ENCODE measurements at regions of chr1 and their contacts with region 1.

Region 1: DNA sequence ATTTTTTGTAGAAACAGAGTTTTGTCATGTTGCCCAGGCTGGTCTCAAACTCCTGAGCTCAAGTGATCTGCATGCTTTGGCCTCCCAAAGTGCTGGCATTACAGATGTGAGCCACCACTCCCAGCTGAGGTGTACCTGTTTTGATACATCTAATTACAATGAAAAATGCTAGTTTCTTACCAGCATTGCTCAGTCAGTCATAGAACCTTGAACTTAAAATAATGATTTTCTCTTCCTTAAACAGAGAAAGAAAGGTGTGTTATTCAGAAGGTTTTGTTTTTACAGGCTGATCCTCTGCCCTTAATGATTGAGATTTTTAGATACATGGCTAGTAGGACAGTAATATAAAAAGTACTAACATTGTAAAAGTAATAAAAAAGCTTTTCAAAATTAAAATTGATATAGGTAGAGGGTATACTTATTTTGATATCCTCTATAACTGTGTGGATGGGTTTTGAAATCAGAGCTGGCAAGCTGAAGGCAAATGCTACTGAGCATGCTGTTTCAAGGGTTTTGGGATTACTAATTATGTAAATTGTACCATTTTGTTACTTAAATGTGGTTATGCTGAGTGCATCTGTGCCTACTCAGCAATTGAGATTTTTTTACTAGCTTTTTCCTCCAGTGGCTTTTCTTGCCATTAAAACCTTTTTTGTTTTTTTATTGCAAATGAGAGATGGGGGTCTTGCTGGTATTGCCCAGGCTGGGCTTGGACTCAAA is 16.1 kb downstream of the PRRC2C start:
- DNase-seq: no peak
- ATAC-seq: no peak
- H3K4me3 ChIP-seq: no peak overlapping the region
- H3K27ac ChIP-seq: no peak overlapping the region
- H3K4me1 ChIP-seq: no peaks in the 10 kb centered on the region; a peak in 1 of 5 replicates
- H3K27me3 ChIP-seq: no peaks in the 10 kb centered on the region
- CTCF ChIP-seq: no peak
- EP300 ChIP-seq: no peak
- POLR2A ChIP-seq: no peak
- RAD21 ChIP-seq: no peak

Region 2: GRCh38 chr1:171515299-171515698 is 13.8 kb after region 1 on chr1:
- CTCF ChIA-PET with region 1: no interaction called
- POLR2A ChIA-PET with region 1: interaction called, 12 read pairs
- in situ Hi-C with region 1: no loop called
- intact Hi-C with region 1: no loop called
- DNase-seq: no peak
- ATAC-seq: no peak
- H3K4me3 ChIP-seq: no peak overlapping the region
- H3K27ac ChIP-seq: no peak overlapping the region
- H3K4me1 ChIP-seq: no peaks in the 10 kb centered on the region
- H3K27me3 ChIP-seq: no peaks in the 10 kb centered on the region
- CTCF ChIP-seq: no peak
- EP300 ChIP-seq: no peak
- POLR2A ChIP-seq: no peak
- RAD21 ChIP-seq: no peak

Region 3: DNA sequence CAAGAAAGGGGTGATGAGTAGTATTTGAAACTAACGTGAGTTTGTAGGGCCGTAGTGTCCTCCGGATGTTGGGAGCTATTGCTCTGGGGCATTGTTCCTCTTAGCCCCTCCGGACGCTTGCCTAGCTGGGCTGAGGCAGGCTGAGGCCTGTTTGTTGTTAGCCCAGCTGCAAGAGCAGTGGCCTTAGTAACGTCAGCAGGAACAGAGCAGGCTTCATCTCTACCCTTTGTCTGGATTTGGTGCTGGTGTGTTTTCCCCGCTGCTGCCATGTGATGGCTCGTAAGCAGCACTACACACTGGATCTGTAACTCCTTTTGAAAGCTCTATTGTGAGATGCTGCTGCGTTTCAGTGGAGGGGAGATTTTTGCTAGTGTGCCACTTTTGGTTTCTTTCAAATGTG is 397.5 kb after region 1 on chr1:
- CTCF ChIA-PET with region 1: no interaction called
- POLR2A ChIA-PET with region 1: no interaction called
- in situ Hi-C with region 1: no loop called
- intact Hi-C with region 1: no loop called
- DNase-seq: no peak
- ATAC-seq: no peak
- H3K4me3 ChIP-seq: no peak overlapping the region
- H3K27ac ChIP-seq: no peak overlapping the region
- H3K4me1 ChIP-seq: no peaks in the 10 kb centered on the region
- H3K27me3 ChIP-seq: peaks cover 3 to 9% of the 10 kb centered on the region in 2 experiments; a peak in 3 of 5 replicates
- CTCF ChIP-seq: no peak
- EP300 ChIP-seq: no peak
- POLR2A ChIP-seq: no peak
- RAD21 ChIP-seq: no peak